ENCODE measurements at regions of chr10 and their contacts with region 1.

Region 1: GRCh38 chr10:35412900-35413491 is 76.7 kb downstream of the CCNY start:
- DNase-seq: no peak
- ATAC-seq: peak; percentile 71
- H3K4me3 Mint-ChIP-seq: no peak overlapping the region
- H3K27ac Mint-ChIP-seq: no peak overlapping the region
- H3K4me1 Mint-ChIP-seq: peaks cover 49% of the 10 kb centered on the region
- H3K27me3 Mint-ChIP-seq: no peaks in the 10 kb centered on the region

Region 2: DNA sequence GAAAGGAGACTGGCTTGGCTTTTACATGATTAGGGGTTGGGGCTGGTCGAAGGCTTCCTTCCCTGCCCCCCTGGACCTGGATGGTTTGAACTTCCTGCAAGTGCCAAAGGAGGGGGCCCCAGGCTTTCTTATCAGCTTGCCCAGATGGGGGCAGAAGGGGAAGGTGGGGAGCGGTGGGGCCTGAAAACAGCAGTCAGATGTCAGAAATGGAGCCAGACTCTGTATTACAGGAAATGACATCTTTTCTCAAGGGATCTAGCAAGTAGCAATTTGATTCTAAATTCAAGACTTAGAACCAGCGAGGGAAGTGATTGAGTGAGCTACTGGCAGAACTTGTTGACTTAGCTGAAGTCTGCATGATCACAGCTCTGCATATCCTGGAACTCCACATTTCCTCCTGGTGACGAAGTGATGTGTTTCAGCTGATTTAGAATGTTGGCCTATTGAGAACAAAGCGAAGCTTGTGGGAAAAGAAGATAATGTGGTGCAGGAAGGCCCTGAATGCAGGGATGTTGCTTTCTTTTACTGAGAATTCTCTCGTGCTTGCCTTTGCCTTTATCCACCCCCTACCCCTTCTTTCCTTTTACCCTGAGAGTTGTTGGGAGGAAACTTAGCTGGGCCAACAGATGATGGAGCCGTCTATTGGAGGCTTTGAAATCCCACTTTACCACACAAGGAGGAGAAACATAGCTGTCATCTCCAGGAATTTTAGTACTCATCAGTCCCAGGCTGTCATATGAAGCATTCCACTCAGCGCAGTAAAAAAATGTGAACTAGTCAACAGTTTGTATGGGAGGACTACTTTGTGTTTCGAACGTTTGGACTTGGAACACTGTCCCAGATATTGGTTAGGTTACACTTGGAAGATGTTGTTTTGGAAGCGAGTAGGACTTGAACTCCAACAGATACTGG is 33.5 kb before region 1 on chr10:
- CTCF ChIA-PET with region 1: no interaction called
- POLR2A ChIA-PET with region 1: interaction called, 5 read pairs
- intact Hi-C with region 1: loop called in 1 of 2 experiments (anchors 5 kb)
- DNase-seq: peak; percentile 34
- ATAC-seq: peak; percentile 45
- H3K4me3 Mint-ChIP-seq: peak overlapping the region; percentile 28
- H3K27ac Mint-ChIP-seq: peak overlapping the region; percentile 88
- H3K4me1 Mint-ChIP-seq: peaks cover 66% of the 10 kb centered on the region
- H3K27me3 Mint-ChIP-seq: no peaks in the 10 kb centered on the region

Region 3: DNA sequence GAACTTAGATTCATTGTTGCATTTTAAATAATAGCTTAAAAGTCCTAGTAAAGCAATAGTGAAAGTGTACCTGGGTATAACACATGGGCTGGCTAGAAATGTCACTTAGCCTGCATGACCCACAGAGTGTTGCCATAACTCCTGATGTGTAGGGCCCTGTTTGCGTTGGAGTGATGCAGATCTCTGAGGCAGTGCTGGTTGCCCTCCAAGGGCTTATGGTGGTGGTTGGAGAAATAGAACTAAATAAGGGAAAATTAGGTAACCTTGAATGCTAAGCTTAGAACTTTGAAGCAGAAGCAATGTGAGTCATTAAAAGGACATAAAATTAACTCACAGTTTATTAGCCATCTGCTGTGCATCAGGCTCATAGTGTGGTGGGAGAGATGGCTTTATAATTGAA is 29.0 kb after region 1 on chr10:
- CTCF ChIA-PET with region 1: interaction called, 4 read pairs
- POLR2A ChIA-PET with region 1: no interaction called
- intact Hi-C with region 1: loop called in 1 of 2 experiments (anchors 2 kb)
- DNase-seq: peak; percentile 37
- ATAC-seq: peak; percentile 66
- H3K4me3 Mint-ChIP-seq: peak overlapping the region; percentile 18
- H3K27ac Mint-ChIP-seq: peak overlapping the region; percentile 83
- H3K4me1 Mint-ChIP-seq: peaks cover 51% of the 10 kb centered on the region
- H3K27me3 Mint-ChIP-seq: no peaks in the 10 kb centered on the region

Measured in activated CD4-positive, alpha-beta T cell treated with anti-CD3 and anti-CD28 coated beads for 36 hours (primary cell).